Activated CD8-positive, alpha-beta T cell treated with anti-CD3 and anti-CD28 coated beads, Interleukin-2, amount 10 ng/mL, durations not matched to agents 7 days and 5 days (primary cell): ENCODE measurements at regions of chrX and their contacts with region 1.

Region 1: DNA sequence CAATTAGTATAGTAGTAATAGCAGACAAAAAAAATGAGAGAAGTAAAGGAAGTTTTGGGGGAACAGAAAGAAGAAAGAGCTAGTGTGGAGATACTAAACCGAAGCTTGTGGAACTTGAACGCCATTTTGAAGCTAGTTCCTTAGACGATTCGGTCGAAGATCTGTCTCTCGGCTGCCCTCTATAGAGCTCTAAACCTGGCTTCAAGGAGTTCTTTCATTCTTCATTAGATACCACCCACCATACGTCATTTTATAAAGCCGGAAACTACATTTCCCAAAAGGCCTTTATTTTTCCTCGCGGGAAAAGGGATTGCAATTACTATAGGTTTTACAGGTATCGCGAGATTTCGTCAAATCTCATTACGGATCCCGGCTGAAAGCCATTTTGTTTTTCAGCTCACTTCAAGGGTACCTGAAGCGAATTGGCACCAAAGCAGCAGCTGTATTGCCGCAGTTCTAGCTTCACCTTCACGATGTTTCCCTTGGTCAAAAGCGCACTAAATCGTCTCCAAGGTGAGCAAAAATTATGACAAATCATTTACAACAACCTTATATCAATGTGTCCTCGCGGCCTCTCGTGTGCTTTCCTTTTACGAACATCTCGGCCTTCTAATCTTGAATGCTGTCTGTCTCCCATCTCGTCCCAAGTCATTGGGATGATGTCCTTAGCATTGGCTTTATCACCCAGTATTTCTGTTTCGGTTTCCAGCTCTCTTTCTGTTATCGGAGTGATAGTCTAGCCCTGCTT is at the start of gene COX7B:
- DNase-seq: peak; percentile 82
- ATAC-seq: peak; percentile 67
- H3K4me3 Mint-ChIP-seq: peak within 1 kb of the TSS; percentile 88
- H3K27ac Mint-ChIP-seq: peak within 1 kb of the TSS; percentile 96
- H3K4me1 Mint-ChIP-seq: peaks cover 23% of the 10 kb centered on the region
- H3K27me3 Mint-ChIP-seq: no peaks in the 10 kb centered on the region
- total RNA-seq, gene COX7B: 329 to 334 TPM

Region 2: DNA sequence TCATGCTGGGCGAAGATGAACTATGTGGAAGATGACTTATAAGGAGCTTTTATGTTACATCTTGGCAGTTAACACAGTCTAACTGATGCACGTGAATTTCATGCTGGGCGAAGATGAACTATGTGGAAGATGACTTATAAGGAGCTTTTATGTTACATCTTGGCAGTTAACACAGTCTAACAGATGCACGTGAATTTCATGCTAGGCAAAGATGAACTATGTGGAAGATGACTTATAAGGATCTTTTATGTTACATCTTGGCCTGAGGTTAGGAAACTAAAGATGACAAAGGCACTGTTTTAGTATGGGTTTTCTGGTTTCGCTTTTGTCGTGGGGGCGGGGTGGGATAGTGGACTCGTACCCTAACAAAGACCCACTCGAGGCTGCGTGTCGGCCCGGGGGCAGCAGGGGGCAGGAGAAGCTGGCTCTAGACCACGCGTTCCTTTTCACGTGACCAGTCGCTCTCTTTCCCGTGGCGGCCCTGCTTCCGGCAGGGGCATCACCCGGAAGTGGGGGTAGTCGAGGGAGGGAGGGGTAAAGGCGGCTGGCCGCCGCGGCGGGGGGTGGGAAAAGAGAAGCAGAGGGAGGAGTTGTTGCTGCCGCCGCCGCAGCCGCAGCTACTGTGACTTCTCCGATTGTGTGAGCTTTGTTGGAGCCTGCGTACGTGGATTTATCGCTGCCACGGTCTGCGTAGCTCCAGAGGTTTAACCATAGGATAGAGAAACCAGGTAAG is 11.0 kb after region 1 on chrX and contains the start of gene ATP7A:
- CTCF ChIA-PET with region 1: interaction called, 32 read pairs
- POLR2A ChIA-PET with region 1: interaction called, 21 read pairs
- DNase-seq: peak; percentile 93
- ATAC-seq: peak; percentile 95
- H3K4me3 Mint-ChIP-seq: peak within 1 kb of the TSS; percentile 88
- H3K27ac Mint-ChIP-seq: peak within 1 kb of the TSS; percentile 91
- H3K4me1 Mint-ChIP-seq: peaks cover 18% of the 10 kb centered on the region
- H3K27me3 Mint-ChIP-seq: no peaks in the 10 kb centered on the region
- total RNA-seq, gene ATP7A: 8.6 to 8.8 TPM